GM18951 (cell line): ENCODE measurements at regions of chr2 and their contacts with region 1.

Region 1: DNA sequence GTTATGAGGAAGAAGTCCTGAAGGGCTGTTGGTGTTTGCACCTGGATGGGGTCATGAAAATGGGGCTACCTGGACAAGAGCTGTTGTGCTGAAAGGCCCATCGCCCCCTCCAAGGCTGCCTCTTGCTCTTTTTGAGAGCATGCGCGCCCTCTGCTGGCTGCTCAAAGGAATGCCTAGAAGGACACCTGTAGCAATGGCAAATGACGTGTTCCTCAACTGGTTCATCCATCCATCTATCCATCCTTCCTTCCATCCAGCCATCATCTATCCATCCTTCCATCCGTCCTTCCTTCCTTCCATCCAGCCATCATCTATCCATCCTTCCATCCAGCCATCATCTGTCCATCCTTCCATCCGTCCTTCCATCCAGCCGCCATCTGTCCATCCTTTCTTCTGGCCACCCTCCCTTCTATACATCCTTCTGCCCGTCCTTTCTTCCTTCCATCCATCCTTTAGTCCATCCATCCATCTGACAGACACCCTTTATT is 17.2 kb upstream of the RPL31 start:
- POLR2A ChIP-seq: no peak

Region 2: DNA sequence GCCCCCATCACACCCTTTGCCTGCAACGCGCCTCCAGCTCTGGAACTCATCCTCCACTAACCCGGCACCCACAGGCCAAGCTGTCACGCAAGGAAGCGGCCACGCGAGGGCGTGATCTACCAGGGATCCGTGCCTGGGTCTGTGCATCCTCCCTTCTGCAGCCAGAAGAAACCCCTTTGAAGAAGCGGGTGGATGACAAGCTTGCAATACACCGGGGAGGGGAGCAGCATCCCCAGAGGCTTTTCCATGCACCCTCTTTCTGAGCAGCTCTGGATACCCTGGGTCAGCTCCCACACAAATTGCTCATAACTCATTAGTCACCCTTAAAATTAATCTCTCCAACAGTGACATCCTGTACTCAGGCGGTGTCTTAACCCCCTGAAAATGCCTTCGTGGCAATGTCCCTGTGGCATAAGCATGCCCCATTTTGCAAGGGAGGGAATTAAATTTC is 374.5 kb before region 1 on chr2:
- in situ Hi-C with region 1: loop called (anchors 25 kb)
- POLR2A ChIP-seq: no peak

Region 3: GRCh38 chr2:102376052-102376591 is 1391.2 kb after region 1 on chr2:
- in situ Hi-C with region 1: no loop called
- POLR2A ChIP-seq: no peak